ENCODE measurements at regions of chr3 and their contacts with region 1.

Region 1: GRCh38 chr3:9352917-9353752 is 9.7 kb upstream of the THUMPD3 start:
- DNase-seq: peak; percentile 73
- ATAC-seq: peak; percentile 81
- H3K4me3 Mint-ChIP-seq: no peak overlapping the region
- H3K27ac Mint-ChIP-seq: peak overlapping the region; percentile 43
- H3K4me1 Mint-ChIP-seq: peaks cover 22% of the 10 kb centered on the region
- H3K27me3 Mint-ChIP-seq: no peaks in the 10 kb centered on the region

Region 2: GRCh38 chr3:9373465-9373864 is 20.3 kb after region 1 on chr3:
- CTCF ChIA-PET with region 1: interaction called, 10 read pairs
- POLR2A ChIA-PET with region 1: no interaction called
- DNase-seq: no peak
- ATAC-seq: peak; percentile 57
- H3K4me3 Mint-ChIP-seq: peak overlapping the region; percentile 22
- H3K27ac Mint-ChIP-seq: peak overlapping the region; percentile 54
- H3K4me1 Mint-ChIP-seq: peaks cover 20% of the 10 kb centered on the region
- H3K27me3 Mint-ChIP-seq: no peaks in the 10 kb centered on the region

Region 3: GRCh38 chr3:9402410-9403228 is 49.5 kb after region 1 on chr3:
- CTCF ChIA-PET with region 1: interaction called, 11 read pairs
- POLR2A ChIA-PET with region 1: interaction called, 5 read pairs
- DNase-seq: no peak
- ATAC-seq: no peak
- H3K4me3 Mint-ChIP-seq: no peak overlapping the region
- H3K27ac Mint-ChIP-seq: no peak overlapping the region
- H3K4me1 Mint-ChIP-seq: peaks cover 65% of the 10 kb centered on the region
- H3K27me3 Mint-ChIP-seq: no peaks in the 10 kb centered on the region

Region 4: GRCh38 chr3:9422712-9423424 is 69.7 kb after region 1 on chr3:
- CTCF ChIA-PET with region 1: interaction called, 13 read pairs
- POLR2A ChIA-PET with region 1: no interaction called
- DNase-seq: no peak
- ATAC-seq: peak; percentile 60
- H3K4me3 Mint-ChIP-seq: no peak overlapping the region
- H3K27ac Mint-ChIP-seq: peak overlapping the region; percentile 66
- H3K4me1 Mint-ChIP-seq: peaks cover 31% of the 10 kb centered on the region
- H3K27me3 Mint-ChIP-seq: no peaks in the 10 kb centered on the region

Region 5: GRCh38 chr3:9441501-9442221 is 88.5 kb after region 1 on chr3:
- CTCF ChIA-PET with region 1: interaction called, 16 read pairs
- POLR2A ChIA-PET with region 1: no interaction called
- DNase-seq: no peak
- ATAC-seq: no peak
- H3K4me3 Mint-ChIP-seq: no peak overlapping the region
- H3K27ac Mint-ChIP-seq: no peak overlapping the region
- H3K4me1 Mint-ChIP-seq: no peaks in the 10 kb centered on the region
- H3K27me3 Mint-ChIP-seq: no peaks in the 10 kb centered on the region

Region 6: DNA sequence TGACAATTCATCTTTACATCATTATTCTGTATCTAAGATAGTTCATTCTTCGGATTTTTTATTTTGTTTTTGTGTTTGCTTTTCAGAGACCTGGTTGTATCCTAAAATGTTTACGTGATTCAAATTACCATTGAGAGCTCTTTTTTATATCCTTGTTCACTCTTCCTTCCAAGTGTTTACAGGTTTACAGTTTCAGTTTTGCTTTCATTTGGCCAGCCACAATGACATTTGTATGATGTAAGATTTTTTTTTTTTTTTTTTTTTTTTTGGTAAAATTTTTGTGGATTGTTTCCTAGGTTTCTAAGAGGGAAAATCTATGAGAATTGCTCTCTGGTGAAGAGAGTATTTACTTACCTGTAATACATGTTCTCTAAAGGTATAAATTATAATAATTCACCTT is 99.3 kb after region 1 on chr3:
- CTCF ChIA-PET with region 1: interaction called, 32 read pairs
- POLR2A ChIA-PET with region 1: no interaction called
- DNase-seq: peak; percentile 31
- ATAC-seq: peak; percentile 53
- H3K4me3 Mint-ChIP-seq: peak overlapping the region; percentile 48
- H3K27ac Mint-ChIP-seq: peak overlapping the region; percentile 89
- H3K4me1 Mint-ChIP-seq: peaks cover 36% of the 10 kb centered on the region
- H3K27me3 Mint-ChIP-seq: no peaks in the 10 kb centered on the region